A673 (cell line): ENCODE measurements at regions of chr3 and their contacts with region 1.

Region 1: GRCh38 chr3:24264748-24265158 is 229.9 kb downstream of the THRB start:
- DNase-seq: peak; percentile 66
- H3K4me3 ChIP-seq: no peak overlapping the region
- H3K27ac ChIP-seq: no peak overlapping the region
- H3K4me1 ChIP-seq: no peaks in the 10 kb centered on the region
- H3K27me3 ChIP-seq: no peaks in the 10 kb centered on the region
- CTCF ChIP-seq: peak; percentile 88

Region 2: GRCh38 chr3:24494618-24495325 is 230.0 kb after region 1 on chr3 and contains the start of gene THRB:
- CTCF ChIA-PET with region 1: interaction called, 8 read pairs
- POLR2A ChIA-PET with region 1: no interaction called
- intact Hi-C with region 1: loop called (anchors 10 kb)
- DNase-seq: peak; percentile 56
- H3K4me3 ChIP-seq: peak within 1 kb of the TSS; percentile 46
- H3K27ac ChIP-seq: no peak within 1 kb of the TSS
- H3K4me1 ChIP-seq: peaks cover 11% of the 10 kb centered on the region
- H3K27me3 ChIP-seq: peaks cover 53% of the 10 kb centered on the region
- CTCF ChIP-seq: peak; percentile 28; the same call in 1 of the 2 replicates
- total RNA-seq, gene THRB: 0.11 and 0.22 TPM in 2 replicates

Region 3: GRCh38 chr3:24640330-24640877 is 375.7 kb after region 1 on chr3:
- CTCF ChIA-PET with region 1: interaction called, 3 read pairs
- POLR2A ChIA-PET with region 1: no interaction called
- intact Hi-C with region 1: loop called (anchors 5 kb)
- DNase-seq: peak; percentile 15
- H3K4me3 ChIP-seq: no peak overlapping the region
- H3K27ac ChIP-seq: no peak overlapping the region
- H3K4me1 ChIP-seq: no peaks in the 10 kb centered on the region
- H3K27me3 ChIP-seq: no peaks in the 10 kb centered on the region
- CTCF ChIP-seq: peak; percentile 49; the same call in 1 of the 2 replicates